CD4-positive, alpha-beta T cell (primary cell): ENCODE measurements at regions of chr3 and their contacts with region 1.

Region 1: DNA sequence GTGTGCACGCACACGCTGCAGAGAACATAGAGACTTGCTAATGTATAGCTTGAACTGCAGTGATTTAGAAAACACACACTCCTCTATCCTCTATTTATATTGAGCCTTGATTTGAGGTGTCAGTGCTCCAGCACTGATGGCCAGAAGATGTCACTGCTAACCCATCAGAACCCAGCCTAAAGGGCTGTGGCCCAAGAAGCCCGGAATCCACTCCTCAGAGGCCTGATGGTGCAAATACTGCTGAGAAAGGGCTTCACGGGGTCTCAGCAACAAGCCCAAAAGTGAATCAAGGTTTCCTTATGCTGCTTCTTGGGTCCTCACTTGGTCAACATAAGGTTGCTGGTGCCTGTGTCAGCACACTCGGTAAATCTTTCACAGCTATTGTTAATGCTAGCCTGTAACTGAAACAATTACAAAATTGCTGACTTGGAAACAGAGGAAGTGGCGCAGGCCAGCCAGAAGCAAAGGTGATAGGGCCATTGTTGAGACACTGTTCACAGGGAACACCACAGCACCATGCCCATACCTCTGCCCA is 60.3 kb downstream of the HEG1 start:
- DNase-seq: peak; percentile 15 to 79 (median 36)
- ATAC-seq: peak; percentile 92
- H3K4me3 ChIP-seq: no peak overlapping the region
- H3K4me3 Mint-ChIP-seq: no peak overlapping the region
- H3K27ac ChIP-seq: no peak overlapping the region
- H3K27ac Mint-ChIP-seq: peak overlapping the region; percentile 38
- H3K4me1 ChIP-seq: peaks cover 5% of the 10 kb centered on the region
- H3K4me1 Mint-ChIP-seq: peaks cover 6% of the 10 kb centered on the region
- H3K27me3 ChIP-seq: no peaks in the 10 kb centered on the region
- H3K27me3 Mint-ChIP-seq: no peaks in the 10 kb centered on the region
- CTCF ChIP-seq: peak; percentile 75

Region 2: GRCh38 chr3:125141596-125142419 is 146.3 kb after region 1 on chr3:
- CTCF ChIA-PET with region 1: no interaction called
- POLR2A ChIA-PET with region 1: no interaction called
- intact Hi-C with region 1: loop called (anchors 5 kb)
- DNase-seq: peak; percentile 27 to 85 (median 67)
- ATAC-seq: peak; percentile 89
- H3K4me3 ChIP-seq: peak overlapping the region; percentile 53
- H3K4me3 Mint-ChIP-seq: peak overlapping the region; percentile 80
- H3K27ac ChIP-seq: no peak overlapping the region
- H3K27ac Mint-ChIP-seq: peak overlapping the region; percentile 16
- H3K4me1 ChIP-seq: peaks cover 40% of the 10 kb centered on the region
- H3K4me1 Mint-ChIP-seq: peaks cover 37% of the 10 kb centered on the region
- H3K27me3 ChIP-seq: no peaks in the 10 kb centered on the region
- H3K27me3 Mint-ChIP-seq: no peaks in the 10 kb centered on the region
- CTCF ChIP-seq: peak; percentile 40

Region 3: GRCh38 chr3:125437631-125438435 is 442.3 kb after region 1 on chr3:
- CTCF ChIA-PET with region 1: interaction called, 10 read pairs
- POLR2A ChIA-PET with region 1: no interaction called
- intact Hi-C with region 1: loop called in 1 of 2 experiments (anchors 1 kb)
- DNase-seq: peak; percentile 45 to 78 (median 58)
- ATAC-seq: peak; percentile 59
- H3K4me3 ChIP-seq: no peak overlapping the region
- H3K4me3 Mint-ChIP-seq: no peak overlapping the region
- H3K27ac ChIP-seq: no peak overlapping the region
- H3K27ac Mint-ChIP-seq: no peak overlapping the region
- H3K4me1 ChIP-seq: peaks cover 2% of the 10 kb centered on the region
- H3K4me1 Mint-ChIP-seq: no peaks in the 10 kb centered on the region
- H3K27me3 ChIP-seq: no peaks in the 10 kb centered on the region
- H3K27me3 Mint-ChIP-seq: no peaks in the 10 kb centered on the region
- CTCF ChIP-seq: peak; percentile 95

Region 4: GRCh38 chr3:125585595-125586223 is 590.2 kb after region 1 on chr3:
- CTCF ChIA-PET with region 1: interaction called, 3 read pairs
- POLR2A ChIA-PET with region 1: no interaction called
- intact Hi-C with region 1: loop called (anchors 1 to 5 kb)
- DNase-seq: peak in 12 of 14 experiments; percentile 5 to 70 (median 28)
- ATAC-seq: peak; percentile 46
- H3K4me3 ChIP-seq: no peak overlapping the region
- H3K4me3 Mint-ChIP-seq: no peak overlapping the region
- H3K27ac ChIP-seq: no peak overlapping the region
- H3K27ac Mint-ChIP-seq: no peak overlapping the region
- H3K4me1 ChIP-seq: peaks cover 4% of the 10 kb centered on the region
- H3K4me1 Mint-ChIP-seq: peaks cover 28% of the 10 kb centered on the region
- H3K27me3 ChIP-seq: no peaks in the 10 kb centered on the region
- H3K27me3 Mint-ChIP-seq: no peaks in the 10 kb centered on the region
- CTCF ChIP-seq: peak; percentile 91